Activated CD4-positive, alpha-beta memory T cell treated with anti-CD3 and anti-CD28 coated beads for 36 hours (primary cell): ENCODE measurements at regions of chr2 and their contacts with region 1.

Region 1: GRCh38 chr2:43226558-43226954 is at the start of gene ZFP36L2:
- DNase-seq: peak; percentile 96
- H3K4me3 Mint-ChIP-seq: peak within 1 kb of the TSS; percentile 94
- H3K27ac Mint-ChIP-seq: peak within 1 kb of the TSS; percentile 96
- H3K4me1 Mint-ChIP-seq: peaks cover 32% of the 10 kb centered on the region
- H3K27me3 Mint-ChIP-seq: no peaks in the 10 kb centered on the region
- total RNA-seq, gene ZFP36L2: 78.4 to 79.8 TPM

Region 2: DNA sequence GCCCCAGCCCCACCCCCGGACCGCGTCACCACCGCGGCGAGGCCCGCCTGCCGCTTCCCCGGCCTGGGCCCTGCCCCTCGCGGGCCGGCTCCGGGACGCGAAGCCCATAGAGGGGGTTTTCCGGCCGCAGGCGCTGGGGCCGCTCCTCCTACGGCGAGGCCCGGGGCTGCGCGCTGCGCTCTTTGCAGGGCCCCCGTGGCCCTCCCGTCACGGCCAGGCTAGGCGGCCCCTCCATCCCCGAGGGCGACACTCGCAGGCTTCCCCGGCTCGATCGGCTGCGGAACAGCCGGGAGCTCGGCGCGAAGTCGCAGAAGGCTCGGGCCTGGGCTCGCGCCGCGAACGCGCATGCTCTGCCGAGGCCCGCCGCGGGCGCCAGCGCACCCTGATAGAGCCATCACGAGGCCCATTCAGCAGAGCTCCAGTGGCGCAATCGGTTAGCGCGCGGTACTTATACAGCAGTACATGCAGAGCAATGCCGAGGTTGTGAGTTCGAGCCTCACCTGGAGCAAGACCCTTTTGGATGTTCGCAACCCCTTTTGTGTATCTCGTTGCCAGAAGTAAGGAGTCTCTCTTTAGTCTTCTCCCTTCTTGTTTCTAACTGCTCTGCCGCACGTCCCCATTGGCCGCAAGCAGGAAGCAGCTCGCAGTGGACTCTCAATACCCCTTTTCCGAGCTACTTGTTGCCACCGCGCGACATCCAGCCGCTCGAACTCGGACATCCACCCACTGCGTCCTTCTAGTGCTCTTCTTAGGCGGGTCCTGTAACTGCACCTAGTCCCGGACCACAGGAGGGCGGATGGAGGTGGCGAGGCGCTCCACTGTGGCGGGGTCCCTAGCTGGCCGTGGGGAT is 416.2 kb before region 1 on chr2:
- CTCF ChIA-PET with region 1: no interaction called
- POLR2A ChIA-PET with region 1: interaction called, 4 read pairs
- intact Hi-C with region 1: loop called (anchors 1 kb)
- DNase-seq: peak; percentile 97
- H3K4me3 Mint-ChIP-seq: peak overlapping the region; percentile 95
- H3K27ac Mint-ChIP-seq: peak overlapping the region; percentile 100
- H3K4me1 Mint-ChIP-seq: peaks cover 12% of the 10 kb centered on the region
- H3K27me3 Mint-ChIP-seq: peaks cover 4% of the 10 kb centered on the region

Region 3: GRCh38 chr2:42944779-42945415 is 281.7 kb before region 1 on chr2:
- CTCF ChIA-PET with region 1: interaction called, 31 read pairs
- POLR2A ChIA-PET with region 1: no interaction called
- intact Hi-C with region 1: loop called (anchors 1 kb)
- DNase-seq: no peak
- H3K4me3 Mint-ChIP-seq: no peak overlapping the region
- H3K27ac Mint-ChIP-seq: no peak overlapping the region
- H3K4me1 Mint-ChIP-seq: no peaks in the 10 kb centered on the region
- H3K27me3 Mint-ChIP-seq: no peaks in the 10 kb centered on the region

Region 4: GRCh38 chr2:43139996-43140621 is 86.4 kb before region 1 on chr2:
- CTCF ChIA-PET with region 1: interaction called, 419 read pairs
- POLR2A ChIA-PET with region 1: interaction called, 283 read pairs
- intact Hi-C with region 1: no loop called
- DNase-seq: peak; percentile 9
- H3K4me3 Mint-ChIP-seq: peak overlapping the region; percentile 31
- H3K27ac Mint-ChIP-seq: peak overlapping the region; percentile 85
- H3K4me1 Mint-ChIP-seq: peaks cover 61% of the 10 kb centered on the region
- H3K27me3 Mint-ChIP-seq: no peaks in the 10 kb centered on the region

Region 5: GRCh38 chr2:43169987-43170386 is 56.6 kb before region 1 on chr2:
- CTCF ChIA-PET with region 1: interaction called, 269 read pairs
- POLR2A ChIA-PET with region 1: interaction called, 215 read pairs
- intact Hi-C with region 1: loop called (anchors 1 kb)
- DNase-seq: peak; percentile 88
- H3K4me3 Mint-ChIP-seq: peak overlapping the region; percentile 43
- H3K27ac Mint-ChIP-seq: peak overlapping the region; percentile 85
- H3K4me1 Mint-ChIP-seq: peaks cover 81% of the 10 kb centered on the region
- H3K27me3 Mint-ChIP-seq: no peaks in the 10 kb centered on the region

Region 6: DNA sequence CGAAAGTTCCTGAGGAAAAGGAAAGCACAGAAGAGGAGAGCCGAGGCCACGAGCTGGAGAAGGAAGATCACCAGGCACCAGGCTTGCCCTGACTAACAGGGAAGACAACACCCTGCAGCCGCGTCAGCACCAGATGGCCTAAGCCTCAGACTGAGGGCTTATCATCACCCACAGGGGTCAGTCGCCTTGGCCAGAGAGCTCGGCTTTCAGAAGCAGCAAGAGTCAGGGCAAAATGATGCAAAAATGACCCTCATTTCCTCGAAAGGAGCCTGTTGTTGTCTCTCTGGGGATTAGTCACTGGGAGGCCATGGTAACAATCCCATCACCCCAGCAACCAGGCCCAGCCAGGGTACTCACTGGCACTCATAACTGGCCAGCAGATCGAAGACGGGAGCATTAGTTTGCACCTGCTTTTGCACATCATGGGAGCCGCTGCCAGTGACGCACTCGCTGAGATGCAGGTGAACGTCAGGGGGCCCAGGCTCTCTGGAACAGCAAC is 42.6 kb after region 1 on chr2:
- CTCF ChIA-PET with region 1: no interaction called
- POLR2A ChIA-PET with region 1: no interaction called
- intact Hi-C with region 1: loop called (anchors 1 kb)
- DNase-seq: no peak
- H3K4me3 Mint-ChIP-seq: no peak overlapping the region
- H3K27ac Mint-ChIP-seq: no peak overlapping the region
- H3K4me1 Mint-ChIP-seq: peaks cover 18% of the 10 kb centered on the region
- H3K27me3 Mint-ChIP-seq: no peaks in the 10 kb centered on the region

Region 7: DNA sequence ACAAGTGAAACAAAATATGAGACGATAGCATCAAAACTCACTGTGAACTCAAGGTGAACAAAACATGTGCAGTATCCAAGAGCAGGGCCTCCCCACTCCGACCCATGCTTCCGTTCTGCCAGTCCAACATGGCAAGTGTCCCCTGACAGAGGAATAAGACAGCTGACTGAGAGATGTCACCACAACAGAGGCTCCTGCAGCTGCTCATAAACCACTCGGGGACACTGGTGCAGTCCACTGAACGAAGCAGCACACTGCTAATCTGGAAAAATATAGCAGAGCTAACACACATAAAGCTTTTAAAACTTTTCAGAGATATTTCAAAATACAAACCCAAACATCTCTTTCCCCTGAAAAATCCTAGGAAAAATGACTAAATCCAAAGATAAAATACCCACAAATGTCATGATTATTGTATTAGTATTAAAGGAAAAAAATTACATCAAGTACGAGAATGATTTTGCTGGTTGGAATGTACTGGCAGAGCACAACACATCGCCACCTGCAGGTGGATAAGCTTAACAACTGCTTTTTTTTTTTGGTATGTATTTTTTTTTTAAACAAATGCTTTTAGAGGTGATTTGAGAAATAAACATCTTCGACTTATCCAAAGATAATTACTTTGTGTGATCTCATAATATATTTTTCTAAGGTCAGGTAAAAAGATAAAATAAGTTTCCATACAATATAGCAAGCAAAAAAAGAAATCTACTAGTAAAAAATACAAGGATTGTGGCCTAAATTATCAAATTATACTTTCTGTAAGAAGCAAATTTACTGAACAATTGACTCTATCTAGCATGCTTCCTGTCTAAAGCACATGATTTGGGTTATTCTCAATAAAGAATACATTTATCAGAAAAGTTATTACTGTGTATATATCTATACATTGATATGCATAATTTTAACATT is 350.7 kb after region 1 on chr2:
- CTCF ChIA-PET with region 1: interaction called, 14 read pairs
- POLR2A ChIA-PET with region 1: no interaction called
- intact Hi-C with region 1: no loop called
- DNase-seq: no peak
- H3K4me3 Mint-ChIP-seq: no peak overlapping the region
- H3K27ac Mint-ChIP-seq: no peak overlapping the region
- H3K4me1 Mint-ChIP-seq: peaks cover 41% of the 10 kb centered on the region
- H3K27me3 Mint-ChIP-seq: no peaks in the 10 kb centered on the region